Activated CD4-positive, alpha-beta memory T cell treated with anti-CD3 and anti-CD28 coated beads for 36 hours (primary cell): ENCODE measurements at regions of chr15 and their contacts with region 1.

Region 1: DNA sequence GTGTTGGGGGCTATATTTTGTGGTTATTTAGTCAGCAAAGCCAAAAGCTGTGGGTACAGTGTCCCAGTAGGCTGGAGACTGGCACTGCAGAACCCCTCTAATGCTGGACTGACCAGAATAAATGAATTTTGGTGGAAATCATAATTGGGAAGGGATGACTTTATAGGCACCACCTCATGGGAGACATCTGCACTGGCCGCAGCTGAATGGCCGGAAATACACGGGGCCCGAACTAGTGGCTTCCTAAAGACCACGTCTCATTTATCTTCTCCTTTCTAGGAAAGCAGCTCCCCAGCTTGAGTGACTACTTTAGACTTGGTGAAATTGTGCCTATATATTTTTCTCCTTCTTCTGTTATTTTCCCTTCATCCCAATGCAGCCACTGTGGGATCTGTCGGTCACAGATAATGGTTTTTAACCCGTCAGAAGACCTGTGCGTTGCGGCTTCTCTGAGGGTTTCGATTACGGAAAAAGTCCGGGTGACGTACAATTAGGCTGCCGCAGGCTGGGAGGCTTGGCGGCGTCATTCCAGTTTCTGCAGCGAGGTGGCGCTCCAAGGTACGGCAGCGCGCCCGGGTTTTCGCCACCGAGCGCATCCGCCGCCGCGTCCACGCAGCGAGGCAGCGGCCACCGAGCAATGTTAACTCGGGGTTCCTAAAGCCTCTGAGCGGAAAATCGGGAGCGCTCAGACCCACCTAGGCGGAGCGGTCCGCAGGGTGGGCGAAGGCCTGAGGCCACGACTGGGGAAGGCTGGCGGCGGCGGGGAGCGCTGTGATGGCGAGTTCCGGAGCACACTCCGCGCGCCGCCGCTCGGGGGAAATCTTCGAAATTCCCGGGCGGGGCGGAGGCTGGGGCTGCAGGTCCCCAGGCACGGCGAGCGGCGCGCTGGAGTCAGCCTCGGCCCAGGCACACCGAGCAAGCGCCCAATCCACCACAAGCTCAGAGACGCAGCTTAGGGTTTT is 26.3 kb downstream of the NR2F2 start:
- DNase-seq: peak; percentile 81
- H3K4me3 Mint-ChIP-seq: peak overlapping the region; percentile 70
- H3K27ac Mint-ChIP-seq: no peak overlapping the region
- H3K4me1 Mint-ChIP-seq: peaks cover 20% of the 10 kb centered on the region
- H3K27me3 Mint-ChIP-seq: peaks cover 47% of the 10 kb centered on the region

Region 2: DNA sequence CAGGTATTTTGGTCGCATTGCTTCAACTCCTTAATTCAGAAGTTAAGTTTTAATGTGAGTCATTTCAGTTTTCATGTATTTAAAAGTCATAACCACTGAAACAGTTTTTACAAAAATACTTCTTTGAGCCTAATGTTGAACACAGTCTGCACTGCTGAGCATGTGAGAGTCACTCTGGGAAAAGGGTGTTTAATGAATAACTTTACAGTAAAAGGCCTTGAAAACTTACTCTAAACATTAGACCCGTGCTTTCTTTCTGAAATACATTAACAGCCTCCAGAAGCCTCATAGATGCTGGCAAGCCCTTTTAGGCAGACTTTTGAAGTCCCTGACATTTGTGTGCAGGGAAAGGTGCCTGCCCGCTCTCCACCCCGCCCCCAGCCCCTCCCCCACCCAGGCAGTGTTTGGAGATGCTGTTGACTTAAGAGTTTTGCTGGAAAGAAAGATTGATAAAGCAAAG is 95.2 kb before region 1 on chr15:
- CTCF ChIA-PET with region 1: no interaction called
- POLR2A ChIA-PET with region 1: no interaction called
- intact Hi-C with region 1: no loop called
- DNase-seq: no peak
- H3K4me3 Mint-ChIP-seq: no peak overlapping the region
- H3K27ac Mint-ChIP-seq: no peak overlapping the region
- H3K4me1 Mint-ChIP-seq: no peaks in the 10 kb centered on the region
- H3K27me3 Mint-ChIP-seq: peaks cover 3% of the 10 kb centered on the region

Region 3: DNA sequence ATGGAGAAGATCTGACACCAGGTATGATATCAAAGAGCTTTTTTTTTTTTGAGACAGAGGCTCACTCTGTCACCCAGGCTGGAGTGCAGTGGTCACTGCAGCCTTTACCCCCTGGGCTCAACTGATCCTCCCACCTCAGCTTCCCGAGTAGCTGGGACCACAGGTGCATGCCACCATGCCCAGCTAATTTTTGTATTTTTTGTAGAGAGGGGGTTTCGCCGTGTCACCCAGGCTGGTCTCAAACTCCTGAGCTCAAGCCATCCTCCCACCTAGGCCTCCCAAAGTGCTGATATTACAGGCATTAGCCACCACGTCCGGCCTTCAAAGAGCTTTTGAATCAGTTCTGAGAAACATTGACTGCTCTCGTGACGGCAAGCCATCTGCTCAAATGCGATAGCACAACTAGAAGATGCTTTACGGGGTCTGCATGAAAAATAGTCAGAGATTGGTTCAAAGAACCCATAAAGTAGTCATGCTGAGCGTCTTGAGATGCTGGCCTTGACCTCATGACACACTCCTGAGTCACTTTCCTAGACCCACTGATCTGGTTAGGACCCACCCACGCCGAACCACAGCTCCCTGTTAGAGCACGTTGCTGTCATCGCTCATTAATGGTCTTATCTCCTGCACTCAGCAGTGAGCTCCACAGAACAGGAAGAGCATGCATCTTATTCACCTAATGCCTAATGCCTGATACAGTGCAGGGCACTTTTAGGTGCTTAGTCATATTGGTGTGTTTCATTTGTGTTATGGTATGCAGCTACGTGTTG is 83.3 kb before region 1 on chr15:
- CTCF ChIA-PET with region 1: no interaction called
- POLR2A ChIA-PET with region 1: no interaction called
- intact Hi-C with region 1: no loop called
- DNase-seq: peak; percentile 25
- H3K4me3 Mint-ChIP-seq: no peak overlapping the region
- H3K27ac Mint-ChIP-seq: no peak overlapping the region
- H3K4me1 Mint-ChIP-seq: no peaks in the 10 kb centered on the region
- H3K27me3 Mint-ChIP-seq: peaks cover 3% of the 10 kb centered on the region

Region 4: DNA sequence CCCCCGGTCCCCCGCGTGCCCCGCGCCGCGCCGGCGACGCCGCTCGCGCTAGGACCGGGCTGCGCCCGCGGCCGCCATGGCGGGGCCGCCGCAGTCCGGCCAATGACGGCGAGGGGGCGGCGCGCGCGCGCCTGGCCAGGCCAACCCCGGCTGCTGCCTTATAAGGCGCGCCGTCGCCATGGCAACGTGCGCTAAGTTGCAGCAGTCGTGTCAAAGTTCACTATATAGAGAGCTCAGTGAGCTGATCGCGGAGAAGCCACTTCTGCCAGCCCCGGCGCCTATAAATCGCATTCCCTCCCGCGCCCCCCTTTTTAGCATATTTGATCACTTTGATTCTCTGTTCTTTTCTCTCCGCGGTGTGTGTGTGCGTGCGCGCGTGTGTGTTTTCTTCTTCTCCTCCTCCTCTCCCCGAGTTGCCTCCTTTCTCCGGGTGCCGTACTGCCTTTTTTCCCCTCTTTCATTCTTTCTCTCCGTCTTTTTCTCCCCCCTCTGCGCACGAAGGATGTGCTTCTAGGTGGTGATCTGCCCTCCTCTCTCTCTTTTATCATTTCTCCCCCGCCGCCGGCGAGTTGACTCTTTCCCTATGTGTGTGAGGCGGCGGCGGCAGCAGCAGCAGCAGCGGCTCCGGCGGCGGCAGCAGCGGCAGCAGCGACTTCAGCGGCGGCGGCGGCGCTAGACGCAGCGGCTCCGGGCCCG is 26.2 kb before region 1 on chr15 and contains the start of gene NR2F2:
- CTCF ChIA-PET with region 1: interaction called, 3 read pairs
- POLR2A ChIA-PET with region 1: no interaction called
- intact Hi-C with region 1: loop called (anchors 2 kb)
- DNase-seq: peak; percentile 65
- H3K4me3 Mint-ChIP-seq: peak within 1 kb of the TSS; percentile 74
- H3K27ac Mint-ChIP-seq: peak within 1 kb of the TSS; percentile 33
- H3K4me1 Mint-ChIP-seq: peaks cover 19% of the 10 kb centered on the region
- H3K27me3 Mint-ChIP-seq: peaks cover 81% of the 10 kb centered on the region
- total RNA-seq, gene NR2F2: not detected

Region 5: GRCh38 chr15:96416934-96417759 is 60.4 kb after region 1 on chr15:
- CTCF ChIA-PET with region 1: no interaction called
- POLR2A ChIA-PET with region 1: no interaction called
- intact Hi-C with region 1: loop called (anchors 5 kb)
- DNase-seq: no peak
- H3K4me3 Mint-ChIP-seq: no peak overlapping the region
- H3K27ac Mint-ChIP-seq: no peak overlapping the region
- H3K4me1 Mint-ChIP-seq: peaks cover 2% of the 10 kb centered on the region
- H3K27me3 Mint-ChIP-seq: peaks cover 66% of the 10 kb centered on the region

Region 6: GRCh38 chr15:96889734-96890480 is 533.1 kb after region 1 on chr15:
- CTCF ChIA-PET with region 1: no interaction called
- POLR2A ChIA-PET with region 1: no interaction called
- intact Hi-C with region 1: loop called (anchors 2 kb)
- DNase-seq: no peak
- H3K4me3 Mint-ChIP-seq: peak overlapping the region; percentile 63
- H3K27ac Mint-ChIP-seq: no peak overlapping the region
- H3K4me1 Mint-ChIP-seq: peaks cover 13% of the 10 kb centered on the region
- H3K27me3 Mint-ChIP-seq: no peaks in the 10 kb centered on the region

Region 7: GRCh38 chr15:97234851-97235610 is 878.3 kb after region 1 on chr15:
- CTCF ChIA-PET with region 1: no interaction called
- POLR2A ChIA-PET with region 1: no interaction called
- intact Hi-C with region 1: loop called (anchors 1 kb)
- DNase-seq: peak; percentile 31
- H3K4me3 Mint-ChIP-seq: no peak overlapping the region
- H3K27ac Mint-ChIP-seq: no peak overlapping the region
- H3K4me1 Mint-ChIP-seq: no peaks in the 10 kb centered on the region
- H3K27me3 Mint-ChIP-seq: no peaks in the 10 kb centered on the region